Activated B cell treated with CpG ODN at 0.5 μM for 24 hours (primary cell): ENCODE measurements at regions of chr18 and their contacts with region 1.

Region 1: DNA sequence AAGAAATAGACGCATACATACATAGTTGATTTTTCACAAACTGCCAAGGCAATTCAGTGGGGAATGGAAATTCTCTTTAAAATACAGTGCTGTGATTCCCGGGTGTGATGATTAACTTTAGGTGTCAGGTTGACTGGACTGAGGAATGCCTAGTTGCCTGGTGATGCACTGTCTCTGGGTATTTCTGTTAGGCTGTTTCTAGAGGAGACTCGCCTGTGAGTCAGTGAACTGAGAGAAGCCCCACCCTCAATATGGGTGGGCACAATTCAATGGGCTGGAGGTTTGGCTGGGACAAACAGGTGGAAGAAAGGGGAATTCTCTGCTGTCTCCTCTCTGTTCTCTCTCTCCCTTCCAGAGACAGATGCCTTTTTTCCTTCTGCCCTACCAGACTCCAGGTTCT is 187.6 kb downstream of the ARHGAP28 start:
- DNase-seq: no peak
- ATAC-seq: no peak
- H3K4me3 Mint-ChIP-seq: no peak overlapping the region
- H3K27ac Mint-ChIP-seq: no peak overlapping the region
- H3K4me1 Mint-ChIP-seq: no peaks in the 10 kb centered on the region
- H3K27me3 Mint-ChIP-seq: no peaks in the 10 kb centered on the region
- CTCF ChIP-seq: no peak

Region 2: GRCh38 chr18:6340121-6340520 is 577.0 kb before region 1 on chr18:
- CTCF ChIA-PET with region 1: no interaction called
- POLR2A ChIA-PET with region 1: no interaction called
- intact Hi-C with region 1: no loop called
- DNase-seq: no peak
- ATAC-seq: no peak
- H3K4me3 Mint-ChIP-seq: no peak overlapping the region
- H3K27ac Mint-ChIP-seq: no peak overlapping the region
- H3K4me1 Mint-ChIP-seq: no peaks in the 10 kb centered on the region
- H3K27me3 Mint-ChIP-seq: no peaks in the 10 kb centered on the region
- CTCF ChIP-seq: no peak

Region 3: DNA sequence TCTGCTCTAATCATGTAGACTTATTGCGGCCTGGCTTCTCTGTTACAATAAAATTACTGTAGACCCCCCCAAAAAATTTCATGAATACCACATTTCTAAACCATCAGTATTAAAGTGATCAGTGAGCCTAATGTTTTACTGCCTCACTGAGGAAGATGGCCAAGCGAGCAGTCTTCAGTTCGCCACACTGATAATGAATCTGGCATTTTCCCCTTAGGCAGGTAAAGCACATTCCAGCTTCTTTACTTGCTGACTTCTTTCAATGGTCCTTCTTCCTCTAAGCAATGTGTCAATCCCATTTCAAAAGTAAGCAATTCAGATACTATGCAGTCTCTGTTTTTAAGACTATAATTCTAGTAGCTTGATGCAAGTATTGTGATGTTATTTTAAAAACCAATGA is 62.9 kb after region 1 on chr18:
- CTCF ChIA-PET with region 1: no interaction called
- POLR2A ChIA-PET with region 1: no interaction called
- intact Hi-C with region 1: loop called (anchors 10 kb)
- DNase-seq: no peak
- ATAC-seq: no peak
- H3K4me3 Mint-ChIP-seq: no peak overlapping the region
- H3K27ac Mint-ChIP-seq: no peak overlapping the region
- H3K4me1 Mint-ChIP-seq: no peaks in the 10 kb centered on the region
- H3K27me3 Mint-ChIP-seq: no peaks in the 10 kb centered on the region
- CTCF ChIP-seq: no peak